Psoas muscle (tissue), 8 donors: ENCODE measurements at regions of chr5 and their contacts with region 1.

Region 1: DNA sequence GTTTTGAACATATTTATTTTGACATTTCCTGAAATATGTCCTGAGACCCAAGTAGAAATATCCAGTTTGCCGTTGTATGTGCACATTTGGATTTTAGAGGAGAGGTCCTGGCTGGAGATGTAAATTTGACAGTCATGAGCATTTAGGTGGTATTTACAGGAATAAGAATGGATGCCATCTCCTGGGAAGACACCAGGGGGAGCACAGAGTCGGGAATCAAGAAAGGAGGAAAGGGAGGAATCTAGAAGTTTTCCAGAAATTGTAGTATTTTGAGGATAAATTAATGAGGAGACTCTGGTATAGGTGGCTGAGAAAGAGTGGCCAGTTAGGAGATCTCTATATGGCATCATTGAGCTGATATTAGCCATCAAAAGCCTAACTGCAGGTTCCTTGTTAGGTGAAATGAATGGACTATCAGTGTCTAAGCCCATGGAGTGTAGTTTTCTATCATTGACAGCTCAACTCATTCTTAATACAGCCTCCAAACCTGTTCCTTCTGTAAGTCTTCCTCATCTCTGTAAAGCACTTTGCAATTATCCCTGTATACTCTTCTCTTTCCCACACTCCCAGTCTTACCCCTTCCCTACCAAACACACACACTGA is 7.2 kb downstream of the GAPT start:
- DNase-seq: no peak
- ATAC-seq: no peak
- H3K4me3 ChIP-seq: no peak overlapping the region
- H3K27ac ChIP-seq: no peak overlapping the region
- H3K4me1 ChIP-seq: no peaks in the 10 kb centered on the region
- H3K27me3 ChIP-seq: peaks cover 0 to 6% (median 6%) of the 10 kb centered on the region in 3 donors
- CTCF ChIP-seq: peak; percentile 58

Region 2: DNA sequence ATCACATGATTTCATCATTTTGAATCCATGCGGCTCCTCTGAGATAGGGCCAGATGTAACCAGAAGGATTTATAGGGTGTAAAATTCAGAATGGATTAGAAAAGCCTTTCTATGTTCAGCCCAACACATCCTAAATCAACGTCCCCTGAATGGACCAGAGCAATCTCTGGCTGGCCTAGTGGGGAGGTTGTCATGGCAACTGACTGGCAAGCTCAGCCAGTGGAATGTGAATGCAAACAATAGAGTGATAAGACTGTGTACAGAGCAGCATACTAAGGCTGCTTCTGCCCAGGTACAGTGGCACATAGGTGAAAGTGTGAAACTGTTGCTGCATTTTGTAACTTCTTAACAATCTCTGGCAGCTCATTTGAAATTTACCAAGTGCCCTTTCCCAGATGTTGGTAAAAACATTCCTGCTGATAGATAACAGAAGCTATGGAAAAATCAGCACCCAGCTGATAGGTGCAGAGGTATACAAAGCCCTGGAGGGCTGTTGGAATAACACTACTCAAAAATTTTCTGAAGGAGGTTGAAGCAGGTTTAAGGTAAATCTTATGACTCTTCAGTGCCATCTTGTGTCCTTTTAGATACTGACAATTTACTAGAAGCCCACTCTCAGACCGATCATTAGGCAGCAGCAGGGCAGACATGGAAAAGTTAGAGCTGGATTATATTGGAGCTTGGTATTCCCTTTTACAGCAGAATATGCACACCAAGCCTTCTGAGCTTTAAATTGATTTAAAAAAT is 351.7 kb after region 1 on chr5:
- intact Hi-C with region 1: loop called (anchors 5 to 10 kb)
- DNase-seq: no peak
- ATAC-seq: peak in 2 of 4 donors; percentile 40 to 56
- H3K4me3 ChIP-seq: no peak overlapping the region
- H3K27ac ChIP-seq: no peak overlapping the region
- H3K4me1 ChIP-seq: no peaks in the 10 kb centered on the region
- H3K27me3 ChIP-seq: no peaks in the 10 kb centered on the region
- CTCF ChIP-seq: peak; percentile 51